PC-9 (cell line): ENCODE measurements at regions of chr14 and their contacts with region 1.

Region 1: GRCh38 chr14:75293920-75294642 is 15.5 kb downstream of the FOS start:
- DNase-seq: peak; percentile 98 to 100
- H3K4me3 ChIP-seq: peak overlapping the region; percentile 65
- H3K27ac ChIP-seq: peak overlapping the region; percentile 79
- H3K4me1 ChIP-seq: peaks cover 40% of the 10 kb centered on the region
- H3K27me3 ChIP-seq: no peaks in the 10 kb centered on the region
- CTCF ChIP-seq: no peak

Region 2: GRCh38 chr14:74945823-74946682 is 348.0 kb before region 1 on chr14:
- CTCF ChIA-PET with region 1: no interaction called
- POLR2A ChIA-PET with region 1: interaction called, 14 read pairs
- intact Hi-C with region 1: no loop called
- DNase-seq: peak; percentile 73 to 91
- H3K4me3 ChIP-seq: no peak overlapping the region
- H3K27ac ChIP-seq: no peak overlapping the region
- H3K4me1 ChIP-seq: peaks cover 9% of the 10 kb centered on the region; the same call in 1 of the 2 replicates
- H3K27me3 ChIP-seq: no peaks in the 10 kb centered on the region
- CTCF ChIP-seq: peak; percentile 99

Region 3: GRCh38 chr14:75050852-75051554 is 243.1 kb before region 1 on chr14 and contains the start of gene MLH3:
- CTCF ChIA-PET with region 1: no interaction called
- POLR2A ChIA-PET with region 1: no interaction called
- intact Hi-C with region 1: no loop called
- DNase-seq: peak; percentile 79 to 93
- H3K4me3 ChIP-seq: peak within 1 kb of the TSS; percentile 82
- H3K27ac ChIP-seq: peak within 1 kb of the TSS; percentile 61
- H3K4me1 ChIP-seq: peaks cover 15% of the 10 kb centered on the region
- H3K27me3 ChIP-seq: no peaks in the 10 kb centered on the region
- CTCF ChIP-seq: 0 out of 2 replicates have a peak, but pooled peaks have one; percentile 5
- total RNA-seq, gene MLH3: 47.6 and 48.7 TPM in 2 replicates

Region 4: GRCh38 chr14:75176142-75176820 is 117.8 kb before region 1 on chr14 and contains the start of gene TMED10:
- CTCF ChIA-PET with region 1: interaction called, 13 read pairs
- POLR2A ChIA-PET with region 1: interaction called, 8 read pairs
- intact Hi-C with region 1: loop called (anchors 1 kb)
- DNase-seq: peak; percentile 84 to 96
- H3K4me3 ChIP-seq: peak within 1 kb of the TSS; percentile 80
- H3K27ac ChIP-seq: peak within 1 kb of the TSS; percentile 94
- H3K4me1 ChIP-seq: peaks cover 26% of the 10 kb centered on the region
- H3K27me3 ChIP-seq: no peaks in the 10 kb centered on the region
- CTCF ChIP-seq: no peak
- total RNA-seq, gene TMED10: 709 and 770 TPM in 2 replicates

Region 5: GRCh38 chr14:75230140-75231045 is 63.7 kb before region 1 on chr14:
- CTCF ChIA-PET with region 1: interaction called, 3 read pairs
- POLR2A ChIA-PET with region 1: interaction called, 8 read pairs
- intact Hi-C with region 1: loop called (anchors 1 kb)
- DNase-seq: peak; percentile 92 to 97
- H3K4me3 ChIP-seq: no peak overlapping the region; the same call in 1 of the 2 replicates
- H3K27ac ChIP-seq: peak overlapping the region; percentile 89
- H3K4me1 ChIP-seq: peaks cover 90% of the 10 kb centered on the region
- H3K27me3 ChIP-seq: no peaks in the 10 kb centered on the region
- CTCF ChIP-seq: peak; percentile 90

Region 6: GRCh38 chr14:75267141-75267721 is 26.9 kb before region 1 on chr14:
- CTCF ChIA-PET with region 1: interaction called, 8 read pairs
- POLR2A ChIA-PET with region 1: interaction called, 23 read pairs
- intact Hi-C with region 1: no loop called
- DNase-seq: no peak
- H3K4me3 ChIP-seq: no peak overlapping the region
- H3K27ac ChIP-seq: no peak overlapping the region
- H3K4me1 ChIP-seq: peaks cover 21% of the 10 kb centered on the region
- H3K27me3 ChIP-seq: no peaks in the 10 kb centered on the region
- CTCF ChIP-seq: no peak